ENCODE measurements at regions of chr9 and their contacts with region 1.

Region 1: GRCh38 chr9:134698587-134699342 is 57.2 kb downstream of the COL5A1 start:
- DNase-seq: peak; percentile 82 to 95
- H3K4me3 ChIP-seq: no peak overlapping the region
- H3K27ac ChIP-seq: no peak overlapping the region
- H3K4me1 ChIP-seq: peaks cover 0 to 10% (median 3%) of the 10 kb centered on the region in 4 experiments; a peak in 4 of 7 replicates
- H3K27me3 ChIP-seq: no peaks in the 10 kb centered on the region
- CTCF ChIP-seq: peak in 2 of 3 experiments; percentile 99 to 100; a peak in 3 of 4 replicates
- EP300 ChIP-seq: peak in 1 of 2 experiments; percentile 36; a peak in 1 of 3 replicates
- POLR2A ChIP-seq: no peak
- RAD21 ChIP-seq: peak; percentile 96

Region 2: GRCh38 chr9:134585746-134586706 is 112.7 kb before region 1 on chr9:
- CTCF ChIA-PET with region 1: no interaction called
- POLR2A ChIA-PET with region 1: no interaction called
- DNase-seq: peak in 1 of 2 experiments; percentile 44
- H3K4me3 ChIP-seq: no peak overlapping the region
- H3K27ac ChIP-seq: no peak overlapping the region
- H3K4me1 ChIP-seq: peaks cover 0 to 4% (median 0%) of the 10 kb centered on the region in 4 experiments; a peak in 1 of 7 replicates
- H3K27me3 ChIP-seq: no peaks in the 10 kb centered on the region
- CTCF ChIP-seq: no peak
- EP300 ChIP-seq: no peak
- POLR2A ChIP-seq: no peak
- RAD21 ChIP-seq: no peak

Region 3: GRCh38 chr9:134738869-134739659 is 40.3 kb after region 1 on chr9:
- CTCF ChIA-PET with region 1: interaction called, 30 read pairs
- POLR2A ChIA-PET with region 1: no interaction called
- DNase-seq: peak; percentile 21 to 93
- H3K4me3 ChIP-seq: no peak overlapping the region
- H3K27ac ChIP-seq: no peak overlapping the region
- H3K4me1 ChIP-seq: peaks cover 0 to 7% (median 1%) of the 10 kb centered on the region in 4 experiments; a peak in 3 of 7 replicates
- H3K27me3 ChIP-seq: no peaks in the 10 kb centered on the region
- CTCF ChIP-seq: peak in 2 of 3 experiments; percentile 77 to 89; a peak in 3 of 4 replicates
- EP300 ChIP-seq: no peak
- POLR2A ChIP-seq: no peak
- RAD21 ChIP-seq: peak; percentile 78 to 83

Region 4: DNA sequence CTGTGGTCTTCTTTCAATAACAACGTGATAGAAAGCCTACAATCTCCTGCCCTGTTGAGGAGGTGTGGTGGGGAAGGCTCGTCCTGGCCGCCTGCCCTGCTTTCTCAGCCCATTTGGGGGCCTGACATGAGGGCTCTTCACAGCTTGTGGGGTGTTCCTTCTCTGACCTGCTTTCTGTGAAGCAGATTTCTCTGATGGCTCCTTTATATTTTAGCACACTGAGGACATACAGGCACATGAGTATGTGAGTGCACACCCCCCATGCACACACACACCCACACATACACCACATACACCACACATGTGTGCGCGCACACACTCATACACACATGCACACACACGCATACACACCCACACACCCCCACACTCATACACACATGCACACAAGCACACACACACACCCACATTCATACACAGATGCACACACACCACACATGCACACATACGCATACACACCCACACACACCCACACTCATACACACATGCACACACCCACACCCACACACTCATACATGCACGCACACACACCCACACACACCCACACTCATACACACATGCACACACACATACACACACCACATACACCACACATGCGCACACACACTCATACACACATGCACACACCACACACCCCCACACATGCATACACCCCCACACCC is 60.3 kb after region 1 on chr9:
- CTCF ChIA-PET with region 1: no interaction called
- POLR2A ChIA-PET with region 1: no interaction called
- DNase-seq: no peak
- H3K4me3 ChIP-seq: no peak overlapping the region
- H3K27ac ChIP-seq: no peak overlapping the region
- H3K4me1 ChIP-seq: no peaks in the 10 kb centered on the region
- H3K27me3 ChIP-seq: no peaks in the 10 kb centered on the region
- CTCF ChIP-seq: no peak
- EP300 ChIP-seq: no peak
- POLR2A ChIP-seq: no peak
- RAD21 ChIP-seq: no peak

Measured in H1 (cell line).